Posterior cingulate gyrus (tissue), 11 donors: ENCODE measurements at regions of chr11 and their contacts with region 1.

Region 1: GRCh38 chr11:77127232-77127911 is 674 bp upstream of the MYO7A start:
- DNase-seq: peak; percentile 25 to 95 (median 70)

Region 2: DNA sequence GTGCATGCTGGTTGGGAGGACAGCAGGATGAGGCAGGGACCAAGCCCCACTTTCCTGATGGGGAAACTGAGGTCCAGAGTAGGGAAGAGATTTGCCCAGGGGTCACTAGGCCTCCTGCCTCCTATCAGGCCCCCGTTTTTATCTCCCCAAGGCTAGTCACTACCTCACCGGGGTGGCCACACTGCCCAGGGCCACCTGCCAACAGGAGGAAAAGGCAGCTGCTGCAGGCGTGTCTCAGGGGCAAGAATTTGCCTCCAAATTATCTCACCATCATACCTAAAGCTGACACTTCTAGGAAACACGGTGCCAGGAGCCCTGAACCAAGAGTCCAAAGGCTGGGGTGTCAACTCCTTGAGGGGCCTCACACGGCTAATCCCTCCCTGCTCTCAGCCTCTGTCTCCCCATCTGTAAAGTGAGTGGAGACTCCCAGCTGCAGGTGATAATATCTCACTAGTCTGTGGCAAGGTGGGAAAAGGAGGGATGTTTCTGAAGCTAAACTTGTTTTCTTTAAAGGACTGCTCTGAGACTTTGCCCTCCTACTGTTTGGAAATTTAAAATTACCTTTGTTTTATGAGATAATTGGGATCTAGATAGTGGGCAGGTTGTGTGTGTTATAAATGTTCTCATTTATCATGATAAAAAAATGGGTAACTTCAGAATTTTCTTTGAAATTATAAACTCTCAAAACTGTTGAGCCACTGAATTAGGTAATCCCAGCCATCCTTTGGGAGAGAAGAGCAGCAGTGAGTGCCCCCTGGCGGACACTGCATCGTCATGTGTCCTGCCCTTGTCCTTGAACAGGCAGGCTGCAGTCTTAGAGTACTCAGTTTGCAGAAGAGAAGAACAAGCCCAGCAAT is 60.6 kb after region 1 on chr11:
- intact Hi-C with region 1: loop called (anchors 1 kb)
- DNase-seq: peak; percentile 59 to 97 (median 84)

Region 3: DNA sequence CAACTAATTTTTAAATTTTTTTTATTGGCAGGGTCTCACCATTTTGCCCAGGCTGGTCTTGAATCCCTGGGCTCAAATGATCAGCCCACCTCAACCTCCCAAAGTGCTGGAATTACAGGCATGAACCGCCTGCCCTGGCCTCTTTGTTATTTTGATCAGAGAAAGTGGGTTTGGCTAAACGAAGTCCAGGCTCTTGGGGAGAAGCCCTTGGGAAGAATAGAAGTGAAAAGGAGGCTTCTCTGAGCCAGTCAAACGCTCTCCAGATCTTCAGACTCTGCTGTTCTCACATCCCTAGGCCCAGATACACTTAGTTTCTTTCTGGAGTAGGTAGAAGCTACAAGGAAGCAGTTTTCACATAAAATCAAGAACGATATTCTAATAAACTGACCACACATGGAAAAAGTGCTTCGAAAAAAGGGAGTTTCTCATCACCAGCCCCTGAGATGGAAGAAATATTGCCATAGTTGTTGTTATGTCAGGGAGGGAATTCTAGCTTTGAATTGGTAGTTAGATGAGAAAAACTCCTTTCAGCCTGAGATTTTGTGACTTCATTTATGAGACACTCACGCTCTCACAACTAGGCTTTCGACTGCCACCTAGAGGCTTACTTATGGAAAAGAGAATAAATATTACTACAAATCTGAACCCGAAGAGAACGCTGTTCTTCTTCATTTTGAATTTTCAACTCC is 420.6 kb after region 1 on chr11:
- intact Hi-C with region 1: loop called (anchors 5 kb)
- DNase-seq: peak in 3 of 10 donors; percentile 14 to 37 (median 27)